Endothelial cell of umbilical vein (primary cell): ENCODE measurements at regions of chr6 and their contacts with region 1.

Region 1: DNA sequence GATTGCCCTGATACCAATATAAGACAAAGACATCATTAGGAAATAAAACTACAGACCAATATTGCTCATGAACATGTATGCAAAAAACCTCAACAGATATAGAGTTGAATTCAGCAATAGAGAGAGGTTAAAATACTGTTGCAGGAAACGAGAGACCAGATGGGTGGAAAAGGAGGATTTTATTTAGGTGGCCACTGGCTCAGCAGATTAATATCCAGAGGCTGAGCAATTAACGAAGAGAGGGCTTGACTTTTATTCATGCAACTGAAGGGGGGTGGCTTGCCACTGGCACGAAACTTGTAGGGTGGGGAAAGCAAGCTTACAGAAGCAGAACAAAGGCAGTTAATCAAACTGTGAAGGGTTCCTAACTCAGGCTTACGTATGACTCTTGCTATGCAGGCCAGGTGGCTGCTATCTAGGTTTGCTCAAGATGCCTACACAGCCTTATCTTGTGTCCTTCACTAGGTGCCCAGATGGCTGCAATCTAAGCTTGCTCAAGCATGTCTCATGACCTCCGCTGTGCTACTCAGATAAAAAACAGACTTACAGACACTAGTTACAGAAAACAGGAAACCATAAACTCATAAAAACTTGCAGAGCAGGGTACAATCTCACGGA is 126.4 kb downstream of the MMUT start:
- DNase-seq: peak; percentile 92
- H3K4me3 ChIP-seq: no peak overlapping the region
- H3K27ac ChIP-seq: peak overlapping the region; percentile 86
- H3K4me1 ChIP-seq: peaks cover 15% of the 10 kb centered on the region
- H3K27me3 ChIP-seq: no peaks in the 10 kb centered on the region
- CTCF ChIP-seq: no peak
- POLR2A ChIP-seq: peak; percentile 64

Region 2: GRCh38 chr6:48429610-48430009 is 907.0 kb before region 1 on chr6:
- CTCF ChIA-PET with region 1: no interaction called
- POLR2A ChIA-PET with region 1: no interaction called
- dilution Hi-C with region 1: no loop called
- intact Hi-C with region 1: loop called (anchors 10 kb)
- DNase-seq: peak; percentile 3
- H3K4me3 ChIP-seq: no peak overlapping the region
- H3K27ac ChIP-seq: peak overlapping the region; percentile 18
- H3K4me1 ChIP-seq: peaks cover 24% of the 10 kb centered on the region
- H3K27me3 ChIP-seq: no peaks in the 10 kb centered on the region
- CTCF ChIP-seq: no peak
- POLR2A ChIP-seq: no peak

Region 3: GRCh38 chr6:48826901-48827701 is 509.5 kb before region 1 on chr6:
- CTCF ChIA-PET with region 1: no interaction called
- POLR2A ChIA-PET with region 1: no interaction called
- dilution Hi-C with region 1: no loop called
- intact Hi-C with region 1: loop called (anchors 1 kb)
- DNase-seq: peak; percentile 71
- H3K4me3 ChIP-seq: peak overlapping the region in 2 of 3 experiments; percentile 20 to 28
- H3K27ac ChIP-seq: peak overlapping the region; percentile 94
- H3K4me1 ChIP-seq: peaks cover 25% of the 10 kb centered on the region
- H3K27me3 ChIP-seq: no peaks in the 10 kb centered on the region
- CTCF ChIP-seq: no peak
- POLR2A ChIP-seq: no peak